ENCODE measurements at regions of chr10 and their contacts with region 1.

Region 1: GRCh38 chr10:97025613-97026242 is 160.0 kb downstream of the SLIT1 start:
- DNase-seq: peak in 3 of 5 donors; percentile 32 to 49 (median 40)
- ATAC-seq: peak in 3 of 4 donors; percentile 31 to 45 (median 34)
- H3K4me3 ChIP-seq: no peak overlapping the region
- H3K27ac ChIP-seq: peak overlapping the region in 2 of 12 donors; percentile 11 to 67
- H3K4me1 ChIP-seq: peaks cover 0 to 28% (median 15%) of the 10 kb centered on the region in 12 donors
- H3K27me3 ChIP-seq: no peaks in the 10 kb centered on the region
- CTCF ChIP-seq: peak; percentile 50 to 73 (median 67)
- POLR2A ChIP-seq: no peak

Region 2: DNA sequence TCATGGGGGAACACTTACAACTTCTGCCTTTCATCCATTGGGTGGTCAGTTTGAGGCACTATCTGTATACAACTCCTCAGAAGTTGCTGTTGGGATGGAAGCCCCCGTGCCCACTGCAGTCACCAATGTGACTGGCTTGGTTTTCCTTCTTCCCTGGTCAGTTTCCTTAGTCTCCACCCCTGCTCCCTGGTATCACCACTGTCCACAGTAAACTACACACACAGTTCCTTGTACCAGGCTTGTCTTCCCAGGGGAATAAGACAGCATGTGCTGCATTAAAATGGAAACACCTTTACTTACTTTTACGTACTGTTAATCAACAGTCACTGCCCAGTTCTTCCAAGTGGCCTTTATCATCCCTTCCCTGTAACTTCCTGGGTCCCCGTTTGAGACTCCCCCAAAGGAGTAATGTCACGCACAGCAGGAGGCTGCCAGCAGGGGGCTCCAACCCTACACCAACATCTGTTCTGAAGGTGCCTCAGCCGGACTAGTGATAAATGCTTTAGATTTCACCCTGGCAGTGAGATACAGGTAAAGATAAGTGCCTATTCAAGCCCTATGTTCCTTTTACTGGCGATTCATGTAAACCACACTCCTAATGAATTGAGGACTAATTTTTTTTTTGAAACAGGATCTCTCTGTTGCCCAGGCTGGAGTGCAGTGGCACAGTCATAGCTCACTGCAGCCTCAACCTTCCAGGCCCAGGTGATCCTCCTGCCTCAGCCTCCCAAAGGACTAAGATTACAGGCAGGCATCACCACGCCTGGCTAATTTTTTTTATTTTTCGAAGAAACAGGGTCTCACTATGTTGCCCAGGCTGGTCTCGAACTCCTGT is 260.1 kb before region 1 on chr10:
- intact Hi-C with region 1: loop called in 6 of 10 experiments (anchors 5 to 10 kb)
- DNase-seq: peak; percentile 38 to 83 (median 57)
- ATAC-seq: peak; percentile 37 to 81 (median 72)
- H3K4me3 ChIP-seq: no peak overlapping the region
- H3K27ac ChIP-seq: no peak overlapping the region
- H3K4me1 ChIP-seq: no peaks in the 10 kb centered on the region
- H3K27me3 ChIP-seq: no peaks in the 10 kb centered on the region
- CTCF ChIP-seq: peak; percentile 58 to 81 (median 74)
- POLR2A ChIP-seq: no peak

Region 3: DNA sequence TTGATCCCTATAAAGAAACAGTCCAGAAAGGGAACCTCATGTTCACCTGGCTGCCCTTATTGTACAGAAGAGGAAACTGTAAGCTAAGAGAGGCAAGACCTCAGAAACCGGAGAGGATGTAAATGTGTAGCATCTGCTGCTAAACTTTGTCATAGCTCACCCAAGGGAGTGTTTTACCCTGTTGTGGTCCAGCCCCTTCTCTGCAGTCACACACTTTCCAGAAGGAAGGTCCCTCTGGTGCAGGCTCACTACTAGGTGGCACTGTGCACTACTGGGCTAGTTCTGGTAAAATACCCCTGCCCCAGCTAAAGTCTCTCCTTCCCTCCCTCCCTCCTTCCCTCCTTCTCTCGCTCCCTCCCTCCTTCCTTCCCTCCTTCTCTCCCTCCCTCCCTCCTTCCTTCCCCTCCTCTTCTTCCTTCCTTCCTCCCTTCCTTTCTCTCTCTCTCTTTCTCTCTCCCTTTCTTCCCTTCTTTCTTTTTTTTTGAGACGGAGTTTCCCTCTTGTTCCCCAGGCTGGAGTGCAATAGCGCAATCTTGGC is 236.1 kb before region 1 on chr10:
- intact Hi-C with region 1: loop called in 2 of 10 experiments (anchors 5 to 10 kb)
- DNase-seq: peak in 2 of 5 donors; percentile 31 to 61
- ATAC-seq: no peak
- H3K4me3 ChIP-seq: no peak overlapping the region
- H3K27ac ChIP-seq: no peak overlapping the region
- H3K4me1 ChIP-seq: no peaks in the 10 kb centered on the region
- H3K27me3 ChIP-seq: peaks cover 0 to 4% (median 0%) of the 10 kb centered on the region in 9 donors
- CTCF ChIP-seq: peak in 2 of 12 donors; percentile 33 to 61
- POLR2A ChIP-seq: no peak

Region 4: GRCh38 chr10:96910488-96911395 is 115.0 kb before region 1 on chr10:
- intact Hi-C with region 1: loop called in 4 of 10 experiments (anchors 5 kb)
- DNase-seq: no peak
- ATAC-seq: peak in 3 of 4 donors; percentile 45 to 59 (median 57)
- H3K4me3 ChIP-seq: no peak overlapping the region
- H3K27ac ChIP-seq: no peak overlapping the region
- H3K4me1 ChIP-seq: peaks cover 0 to 34% (median 10%) of the 10 kb centered on the region in 12 donors
- H3K27me3 ChIP-seq: no peaks in the 10 kb centered on the region
- CTCF ChIP-seq: peak; percentile 44 to 75 (median 66)
- POLR2A ChIP-seq: no peak

Region 5: DNA sequence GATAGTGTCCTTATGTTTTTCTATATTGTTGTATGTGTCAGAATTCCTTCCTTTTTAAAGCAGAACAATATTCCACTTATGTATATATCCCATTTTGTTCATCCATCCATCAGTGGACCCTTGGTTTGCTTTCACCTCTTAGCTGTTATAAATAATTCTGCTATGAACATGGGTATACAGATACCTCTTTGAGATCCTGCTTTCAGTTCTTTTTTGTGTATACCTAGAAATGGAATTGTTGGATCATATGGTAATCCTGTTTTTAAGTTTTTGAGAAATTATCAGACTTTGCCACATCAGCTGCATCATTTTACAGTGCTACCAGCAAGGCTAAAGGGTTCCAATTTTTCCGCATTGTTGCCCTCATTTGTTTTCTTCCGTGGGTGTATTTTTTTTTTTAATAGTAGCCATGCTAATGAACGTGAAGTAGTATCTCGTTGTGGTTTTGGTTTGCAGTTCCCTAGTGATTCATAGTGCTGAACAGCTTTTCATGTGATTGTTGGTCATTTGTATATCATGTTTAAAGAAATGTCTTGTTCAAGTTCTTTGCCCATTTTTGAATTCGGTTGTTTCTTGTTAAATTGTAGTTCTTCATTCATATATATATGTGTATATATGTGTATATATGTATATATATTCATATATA is 105.8 kb before region 1 on chr10:
- intact Hi-C with region 1: loop called in 1 of 10 experiments (anchors 5 kb)
- DNase-seq: no peak
- ATAC-seq: no peak
- H3K4me3 ChIP-seq: no peak overlapping the region
- H3K27ac ChIP-seq: peak overlapping the region in 1 of 12 donors; percentile 5
- H3K4me1 ChIP-seq: peaks cover 3 to 51% (median 24%) of the 10 kb centered on the region in 12 donors
- H3K27me3 ChIP-seq: no peaks in the 10 kb centered on the region
- CTCF ChIP-seq: no peak
- POLR2A ChIP-seq: no peak

Measured in heart left ventricle (tissue), 16 donors.